ENCODE measurements at regions of chr7 and their contacts with region 1.

Region 1: GRCh38 chr7:158863611-158864506 is 7.5 kb downstream of the DYNC2I1 start:
- DNase-seq: peak; percentile 83
- ATAC-seq: peak; percentile 77
- H3K4me3 Mint-ChIP-seq: peak overlapping the region; percentile 78
- H3K27ac Mint-ChIP-seq: peak overlapping the region; percentile 92
- H3K4me1 Mint-ChIP-seq: peaks cover 41% of the 10 kb centered on the region
- H3K27me3 Mint-ChIP-seq: no peaks in the 10 kb centered on the region

Region 2: GRCh38 chr7:158704704-158705468 is 159.0 kb before region 1 on chr7 and contains the start of gene NCAPG2:
- CTCF ChIA-PET with region 1: no interaction called
- POLR2A ChIA-PET with region 1: interaction called, 12 read pairs
- intact Hi-C with region 1: no loop called
- DNase-seq: peak; percentile 99
- ATAC-seq: peak; percentile 98
- H3K4me3 Mint-ChIP-seq: peak within 1 kb of the TSS; percentile 85
- H3K27ac Mint-ChIP-seq: peak within 1 kb of the TSS; percentile 81
- H3K4me1 Mint-ChIP-seq: peaks cover 44% of the 10 kb centered on the region
- H3K27me3 Mint-ChIP-seq: no peaks in the 10 kb centered on the region
- total RNA-seq, gene NCAPG2: 85.4 to 127 TPM

Region 3: GRCh38 chr7:158772911-158773310 is 90.9 kb before region 1 on chr7:
- CTCF ChIA-PET with region 1: no interaction called
- POLR2A ChIA-PET with region 1: interaction called, 11 read pairs
- intact Hi-C with region 1: loop called in 1 of 2 experiments (anchors 5 kb)
- DNase-seq: no peak
- ATAC-seq: no peak
- H3K4me3 Mint-ChIP-seq: no peak overlapping the region
- H3K27ac Mint-ChIP-seq: no peak overlapping the region
- H3K4me1 Mint-ChIP-seq: peaks cover 49% of the 10 kb centered on the region
- H3K27me3 Mint-ChIP-seq: no peaks in the 10 kb centered on the region

Region 4: DNA sequence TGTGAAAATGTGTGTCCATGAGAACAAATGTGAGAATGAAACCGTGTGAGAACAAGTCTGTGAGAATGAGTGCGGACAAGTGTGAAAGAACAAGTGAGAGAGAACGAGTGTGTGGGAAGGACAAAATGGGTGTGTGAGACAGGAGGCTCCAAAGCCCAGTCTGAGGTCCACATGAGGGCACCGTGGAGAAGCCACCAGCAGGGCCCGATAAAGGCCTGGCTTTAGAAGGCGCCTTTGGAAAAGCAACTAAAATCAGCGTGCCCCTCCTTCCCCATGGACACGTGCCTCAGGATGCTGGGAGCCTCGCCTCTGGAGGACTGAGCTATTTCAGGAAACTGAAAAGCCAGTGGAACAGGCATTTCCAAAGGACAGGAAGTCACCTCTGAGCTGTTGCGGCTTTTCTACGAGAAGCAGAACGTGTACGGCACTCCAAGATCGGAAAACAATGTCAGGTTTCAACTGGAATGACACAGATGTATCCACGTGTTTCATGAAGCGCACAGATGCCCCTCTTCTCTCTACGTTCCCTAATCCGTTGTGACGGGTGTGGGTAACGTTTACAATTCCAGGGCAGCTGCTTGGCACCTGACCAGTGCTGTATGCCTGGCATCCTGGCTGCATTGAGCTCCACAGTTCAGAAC is 81.0 kb before region 1 on chr7:
- CTCF ChIA-PET with region 1: no interaction called
- POLR2A ChIA-PET with region 1: no interaction called
- intact Hi-C with region 1: loop called in 1 of 2 experiments (anchors 5 kb)
- DNase-seq: peak; percentile 34
- ATAC-seq: peak; percentile 49
- H3K4me3 Mint-ChIP-seq: no peak overlapping the region
- H3K27ac Mint-ChIP-seq: no peak overlapping the region
- H3K4me1 Mint-ChIP-seq: peaks cover 4% of the 10 kb centered on the region
- H3K27me3 Mint-ChIP-seq: no peaks in the 10 kb centered on the region

Region 5: DNA sequence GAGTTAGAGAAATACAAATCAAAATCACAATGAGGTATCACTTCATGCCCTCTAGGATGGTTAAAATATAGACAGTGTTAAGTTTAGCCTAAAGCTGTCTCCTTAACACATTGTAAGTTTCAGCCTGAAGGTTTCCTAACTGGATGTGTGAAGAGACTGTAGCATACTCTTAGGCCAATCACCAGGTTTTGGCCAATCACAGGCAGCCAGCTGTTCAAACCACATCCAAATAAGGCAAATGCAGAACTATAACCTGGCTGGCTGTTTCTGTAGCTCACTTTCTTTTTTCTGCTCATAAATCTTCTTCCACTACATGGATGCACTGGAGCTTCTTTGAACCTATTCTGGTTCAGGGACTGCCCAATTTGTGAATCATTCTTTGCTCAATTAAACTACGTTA is 54.3 kb before region 1 on chr7:
- CTCF ChIA-PET with region 1: no interaction called
- POLR2A ChIA-PET with region 1: interaction called, 3 read pairs
- intact Hi-C with region 1: loop called in 1 of 2 experiments (anchors 2 kb)
- DNase-seq: peak; percentile 53
- ATAC-seq: peak; percentile 33
- H3K4me3 Mint-ChIP-seq: peak overlapping the region; percentile 40
- H3K27ac Mint-ChIP-seq: peak overlapping the region; percentile 96
- H3K4me1 Mint-ChIP-seq: peaks cover 67% of the 10 kb centered on the region
- H3K27me3 Mint-ChIP-seq: no peaks in the 10 kb centered on the region

Region 6: GRCh38 chr7:158847451-158847866 is 16.4 kb before region 1 on chr7:
- CTCF ChIA-PET with region 1: interaction called, 13 read pairs
- POLR2A ChIA-PET with region 1: interaction called, 10 read pairs
- intact Hi-C with region 1: no loop called
- DNase-seq: peak; percentile 39
- ATAC-seq: peak; percentile 81
- H3K4me3 Mint-ChIP-seq: peak overlapping the region; percentile 66
- H3K27ac Mint-ChIP-seq: peak overlapping the region; percentile 95
- H3K4me1 Mint-ChIP-seq: peaks cover 39% of the 10 kb centered on the region
- H3K27me3 Mint-ChIP-seq: no peaks in the 10 kb centered on the region

Region 7: GRCh38 chr7:158941796-158942195 is 77.9 kb after region 1 on chr7:
- CTCF ChIA-PET with region 1: no interaction called
- POLR2A ChIA-PET with region 1: no interaction called
- intact Hi-C with region 1: loop called in 1 of 2 experiments (anchors 2 kb)
- DNase-seq: no peak
- ATAC-seq: no peak
- H3K4me3 Mint-ChIP-seq: no peak overlapping the region
- H3K27ac Mint-ChIP-seq: no peak overlapping the region
- H3K4me1 Mint-ChIP-seq: no peaks in the 10 kb centered on the region
- H3K27me3 Mint-ChIP-seq: no peaks in the 10 kb centered on the region

Region 8: GRCh38 chr7:158963771-158964241 is 99.9 kb after region 1 on chr7:
- CTCF ChIA-PET with region 1: no interaction called
- POLR2A ChIA-PET with region 1: no interaction called
- intact Hi-C with region 1: no loop called
- DNase-seq: no peak
- ATAC-seq: no peak
- H3K4me3 Mint-ChIP-seq: no peak overlapping the region
- H3K27ac Mint-ChIP-seq: no peak overlapping the region
- H3K4me1 Mint-ChIP-seq: no peaks in the 10 kb centered on the region
- H3K27me3 Mint-ChIP-seq: peaks cover 2% of the 10 kb centered on the region

Region 9: DNA sequence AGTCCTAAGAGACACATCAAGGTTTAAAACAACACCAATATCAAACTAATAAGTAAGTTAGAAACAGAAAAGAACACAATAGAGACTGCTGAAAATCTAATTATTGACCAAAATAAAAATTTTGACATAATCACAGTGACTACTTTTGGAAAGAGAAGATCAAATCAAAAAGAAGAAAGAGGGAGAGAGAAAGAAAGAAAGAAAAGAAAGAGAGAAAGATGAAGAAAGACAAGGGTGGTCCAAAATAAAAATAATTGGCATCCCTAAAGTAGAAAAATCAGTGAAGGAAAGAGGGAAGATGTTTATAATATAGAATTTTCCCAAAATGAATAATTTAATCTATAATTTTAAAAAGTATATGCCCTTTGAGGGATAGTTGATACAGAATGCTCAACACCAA is 399.6 kb after region 1 on chr7:
- CTCF ChIA-PET with region 1: no interaction called
- POLR2A ChIA-PET with region 1: no interaction called
- intact Hi-C with region 1: no loop called
- DNase-seq: no peak
- ATAC-seq: no peak
- H3K4me3 Mint-ChIP-seq: no peak overlapping the region
- H3K27ac Mint-ChIP-seq: no peak overlapping the region
- H3K4me1 Mint-ChIP-seq: no peaks in the 10 kb centered on the region
- H3K27me3 Mint-ChIP-seq: peaks cover 9% of the 10 kb centered on the region

Measured in activated CD4-positive, alpha-beta T cell treated with anti-CD3 and anti-CD28 coated beads for 36 hours (primary cell).